ENCODE measurements at regions of chr11 and their contacts with region 1.

Region 1: GRCh38 chr11:10878408-10879214 is 20.8 kb upstream of the ZBED5 start:
- DNase-seq: no peak
- ATAC-seq: peak; percentile 74
- H3K4me3 Mint-ChIP-seq: no peak overlapping the region
- H3K27ac Mint-ChIP-seq: no peak overlapping the region
- H3K4me1 Mint-ChIP-seq: peaks cover 9% of the 10 kb centered on the region
- H3K27me3 Mint-ChIP-seq: no peaks in the 10 kb centered on the region
- CTCF ChIP-seq: peak; percentile 75

Region 2: DNA sequence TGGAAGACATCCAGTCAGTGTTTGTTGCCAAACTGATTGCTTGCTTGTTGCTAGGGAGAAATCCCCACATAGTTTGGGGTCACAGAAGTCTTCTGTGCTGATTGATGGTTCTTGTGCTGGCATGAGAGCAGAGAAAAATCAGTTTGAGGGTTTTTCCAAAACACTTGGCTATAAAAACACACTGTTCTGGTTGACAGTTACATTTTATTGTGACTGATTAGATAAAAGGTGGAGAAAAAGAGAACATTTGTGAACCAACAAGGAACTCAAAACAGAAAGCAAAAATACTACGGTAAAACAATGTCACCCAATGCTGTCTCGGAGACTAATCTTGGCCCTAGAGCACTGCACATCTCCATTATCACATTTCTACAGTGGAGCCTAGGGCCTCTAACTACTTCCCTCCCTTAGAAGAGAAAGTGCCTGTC is 55.4 kb before region 1 on chr11:
- CTCF ChIA-PET with region 1: no interaction called
- POLR2A ChIA-PET with region 1: no interaction called
- intact Hi-C with region 1: no loop called
- DNase-seq: no peak
- ATAC-seq: no peak
- H3K4me3 Mint-ChIP-seq: no peak overlapping the region
- H3K27ac Mint-ChIP-seq: no peak overlapping the region
- H3K4me1 Mint-ChIP-seq: peaks cover 5% of the 10 kb centered on the region
- H3K27me3 Mint-ChIP-seq: no peaks in the 10 kb centered on the region
- CTCF ChIP-seq: no peak

Region 3: GRCh38 chr11:10838083-10838482 is 40.5 kb before region 1 on chr11:
- CTCF ChIA-PET with region 1: interaction called, 10 read pairs
- POLR2A ChIA-PET with region 1: no interaction called
- intact Hi-C with region 1: no loop called
- DNase-seq: no peak
- ATAC-seq: no peak
- H3K4me3 Mint-ChIP-seq: no peak overlapping the region
- H3K27ac Mint-ChIP-seq: no peak overlapping the region
- H3K4me1 Mint-ChIP-seq: peaks cover 8% of the 10 kb centered on the region
- H3K27me3 Mint-ChIP-seq: no peaks in the 10 kb centered on the region
- CTCF ChIP-seq: no peak

Region 4: DNA sequence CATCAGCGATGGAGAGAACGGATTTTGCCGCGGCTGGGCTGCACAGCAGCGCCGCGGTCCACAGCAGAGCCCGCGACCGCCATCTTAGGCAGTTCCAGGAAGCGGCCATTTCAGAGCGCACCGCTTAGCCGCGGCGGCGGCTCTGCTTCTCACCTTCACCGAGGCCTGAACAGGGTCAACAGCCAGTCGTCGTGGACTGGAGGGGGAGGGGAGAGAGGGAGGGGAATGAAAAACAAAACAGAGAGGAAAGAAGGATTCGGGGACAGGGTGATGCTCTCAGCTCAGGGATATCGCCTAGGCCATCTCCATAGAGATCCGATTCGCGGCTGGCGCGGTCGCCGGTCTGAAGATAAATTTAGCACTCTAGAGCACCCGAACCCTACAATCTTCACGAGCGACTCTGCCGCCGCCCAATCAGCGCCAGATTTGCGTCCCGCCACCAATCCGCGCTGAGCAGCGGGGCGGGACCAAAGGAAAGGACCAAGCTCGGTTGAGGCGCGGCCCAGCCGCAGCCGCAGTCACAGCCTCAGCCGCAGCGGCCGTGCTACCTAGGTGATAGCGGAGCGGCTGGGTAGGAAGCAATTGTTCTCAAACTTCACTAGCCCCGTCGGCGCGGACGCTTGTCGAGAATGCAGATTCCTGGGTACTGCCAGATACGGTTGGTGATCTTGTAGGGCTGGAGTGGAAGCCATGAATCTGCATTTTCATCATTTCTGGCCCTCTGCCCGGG is 20.7 kb before region 1 on chr11 and contains the start of gene ZBED5:
- CTCF ChIA-PET with region 1: interaction called, 24 read pairs
- POLR2A ChIA-PET with region 1: interaction called, 16 read pairs
- intact Hi-C with region 1: no loop called
- DNase-seq: peak; percentile 97
- ATAC-seq: peak; percentile 94
- H3K4me3 Mint-ChIP-seq: peak within 1 kb of the TSS; percentile 97
- H3K27ac Mint-ChIP-seq: peak within 1 kb of the TSS; percentile 98
- H3K4me1 Mint-ChIP-seq: peaks cover 38% of the 10 kb centered on the region
- H3K27me3 Mint-ChIP-seq: no peaks in the 10 kb centered on the region
- CTCF ChIP-seq: no peak
- total RNA-seq, gene ZBED5: 35.7 to 36.7 TPM

Region 5: GRCh38 chr11:10866893-10867331 is 11.7 kb before region 1 on chr11:
- CTCF ChIA-PET with region 1: interaction called, 24 read pairs
- POLR2A ChIA-PET with region 1: no interaction called
- intact Hi-C with region 1: no loop called
- DNase-seq: no peak
- ATAC-seq: no peak
- H3K4me3 Mint-ChIP-seq: no peak overlapping the region
- H3K27ac Mint-ChIP-seq: no peak overlapping the region
- H3K4me1 Mint-ChIP-seq: peaks cover 25% of the 10 kb centered on the region
- H3K27me3 Mint-ChIP-seq: no peaks in the 10 kb centered on the region
- CTCF ChIP-seq: no peak

Region 6: DNA sequence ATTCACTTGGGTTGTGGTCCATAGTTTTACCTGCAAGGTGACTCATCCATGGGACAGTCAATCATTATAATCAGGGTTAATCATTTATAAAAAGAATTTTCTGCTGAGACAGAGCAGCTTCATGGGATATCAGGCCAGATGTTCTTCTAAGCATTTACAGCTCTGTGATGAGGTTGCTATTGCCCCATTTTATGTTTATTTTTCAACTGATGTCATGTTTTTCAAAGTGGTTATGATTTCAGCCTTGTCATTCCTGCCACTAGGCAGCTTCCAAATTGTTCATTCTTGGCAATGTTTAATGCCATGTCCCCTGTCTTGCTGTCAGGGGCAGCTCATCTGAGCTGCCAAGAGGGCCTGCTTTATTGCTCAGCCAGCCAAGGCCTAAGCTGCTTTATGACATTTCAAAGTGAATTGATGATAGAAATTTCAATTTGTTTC is 15.1 kb after region 1 on chr11:
- CTCF ChIA-PET with region 1: interaction called, 29 read pairs
- POLR2A ChIA-PET with region 1: interaction called, 3 read pairs
- intact Hi-C with region 1: no loop called
- DNase-seq: no peak
- ATAC-seq: no peak
- H3K4me3 Mint-ChIP-seq: no peak overlapping the region
- H3K27ac Mint-ChIP-seq: no peak overlapping the region
- H3K4me1 Mint-ChIP-seq: peaks cover 7% of the 10 kb centered on the region
- H3K27me3 Mint-ChIP-seq: no peaks in the 10 kb centered on the region
- CTCF ChIP-seq: no peak

Region 7: DNA sequence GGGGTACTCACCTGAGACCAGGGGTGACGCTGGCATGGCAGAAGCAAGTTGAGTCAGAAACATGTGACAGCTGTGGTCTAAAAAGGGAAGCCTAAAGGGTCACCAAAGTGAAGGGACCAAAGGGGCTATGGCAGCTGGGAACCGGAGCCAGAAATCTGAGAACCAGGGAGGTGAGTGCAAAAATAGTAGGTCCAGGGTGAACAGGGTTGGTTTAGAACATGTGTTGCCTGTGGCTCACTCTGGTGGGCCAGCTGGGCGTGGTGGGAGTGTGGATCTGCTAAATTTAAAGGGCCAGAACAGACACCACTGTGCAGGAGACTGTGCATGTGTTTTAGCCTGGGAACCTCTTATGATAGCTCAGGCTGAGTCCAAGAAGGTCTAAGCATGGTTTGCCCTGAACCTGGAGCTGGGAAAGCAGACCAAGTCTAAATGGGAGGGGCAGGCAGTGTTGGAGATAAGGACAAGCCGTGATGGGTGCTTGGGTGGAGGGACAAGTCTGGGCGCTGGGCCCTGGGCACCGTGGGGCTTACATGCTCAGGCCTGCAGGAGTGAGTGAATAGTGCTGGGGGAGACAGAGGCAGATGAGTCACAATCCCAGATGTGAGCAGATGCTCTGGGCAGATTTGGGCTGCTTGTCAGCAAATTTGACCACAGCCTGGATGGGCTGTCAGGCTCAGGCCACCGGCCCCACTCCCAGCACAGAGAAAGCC is 20.7 kb after region 1 on chr11:
- CTCF ChIA-PET with region 1: interaction called, 29 read pairs
- POLR2A ChIA-PET with region 1: no interaction called
- intact Hi-C with region 1: no loop called
- DNase-seq: peak; percentile 32
- ATAC-seq: peak; percentile 60
- H3K4me3 Mint-ChIP-seq: no peak overlapping the region
- H3K27ac Mint-ChIP-seq: peak overlapping the region; percentile 87
- H3K4me1 Mint-ChIP-seq: peaks cover 28% of the 10 kb centered on the region
- H3K27me3 Mint-ChIP-seq: no peaks in the 10 kb centered on the region
- CTCF ChIP-seq: no peak

Measured in activated CD8-positive, alpha-beta T cell treated with anti-CD3 and anti-CD28 coated beads for 36 hours (primary cell).